Activated naive CD4-positive, alpha-beta T cell treated with anti-CD3 and anti-CD28 coated beads for 36 hours (primary cell): ENCODE measurements at regions of chr5 and their contacts with region 1.

Region 1: GRCh38 chr5:174418928-174419796 is 305.2 kb upstream of the MSX2 start:
- DNase-seq: peak; percentile 91
- H3K4me3 Mint-ChIP-seq: peak overlapping the region; percentile 34
- H3K27ac Mint-ChIP-seq: no peak overlapping the region
- H3K4me1 Mint-ChIP-seq: peaks cover 11% of the 10 kb centered on the region
- H3K27me3 Mint-ChIP-seq: peaks cover 26% of the 10 kb centered on the region

Region 2: DNA sequence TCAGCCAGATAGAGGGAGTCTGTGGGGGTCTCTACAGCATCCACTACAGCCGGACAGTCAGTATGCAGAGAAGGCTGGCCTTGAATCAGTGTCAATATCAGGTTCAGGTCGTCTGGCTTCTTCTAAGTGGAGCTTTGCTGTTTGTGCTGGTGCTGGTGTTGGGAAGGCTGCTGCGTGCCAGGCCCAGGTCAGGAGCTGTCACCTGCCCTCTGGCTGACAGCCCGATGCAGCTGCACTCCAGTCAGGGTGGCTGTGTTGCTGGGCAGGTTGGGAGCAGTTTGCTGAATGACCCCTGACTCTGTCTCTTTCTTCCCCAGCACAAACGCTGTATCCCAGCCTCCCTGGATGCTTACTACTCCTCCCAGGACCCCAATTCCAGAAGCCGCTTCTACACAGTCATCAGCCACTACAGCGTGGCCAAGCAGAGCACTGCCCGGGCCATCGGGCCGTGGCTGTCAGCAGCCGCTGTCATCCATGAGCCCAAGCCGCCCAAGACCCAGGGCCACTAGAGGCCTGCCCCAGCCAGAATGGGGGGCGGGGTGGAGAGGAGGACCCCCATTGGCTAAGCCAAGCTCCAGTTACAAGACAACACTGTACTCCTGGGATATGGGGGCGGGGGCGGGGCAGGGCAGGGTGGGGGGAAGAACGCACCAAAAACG is 312.0 kb before region 1 on chr5:
- CTCF ChIA-PET with region 1: no interaction called
- intact Hi-C with region 1: no loop called
- DNase-seq: no peak
- H3K4me3 Mint-ChIP-seq: no peak overlapping the region
- H3K27ac Mint-ChIP-seq: no peak overlapping the region
- H3K4me1 Mint-ChIP-seq: no peaks in the 10 kb centered on the region
- H3K27me3 Mint-ChIP-seq: peaks cover 3% of the 10 kb centered on the region

Region 3: GRCh38 chr5:174327317-174328236 is 91.6 kb before region 1 on chr5:
- CTCF ChIA-PET with region 1: no interaction called
- intact Hi-C with region 1: loop called (anchors 2 kb)
- DNase-seq: peak; percentile 76
- H3K4me3 Mint-ChIP-seq: no peak overlapping the region
- H3K27ac Mint-ChIP-seq: peak overlapping the region; percentile 31
- H3K4me1 Mint-ChIP-seq: no peaks in the 10 kb centered on the region
- H3K27me3 Mint-ChIP-seq: peaks cover 22% of the 10 kb centered on the region

Region 4: GRCh38 chr5:174735498-174736330 is 316.6 kb after region 1 on chr5:
- CTCF ChIA-PET with region 1: no interaction called
- intact Hi-C with region 1: loop called (anchors 1 kb)
- DNase-seq: peak; percentile 26
- H3K4me3 Mint-ChIP-seq: no peak overlapping the region
- H3K27ac Mint-ChIP-seq: peak overlapping the region; percentile 18
- H3K4me1 Mint-ChIP-seq: peaks cover 14% of the 10 kb centered on the region
- H3K27me3 Mint-ChIP-seq: peaks cover 72% of the 10 kb centered on the region

Region 5: DNA sequence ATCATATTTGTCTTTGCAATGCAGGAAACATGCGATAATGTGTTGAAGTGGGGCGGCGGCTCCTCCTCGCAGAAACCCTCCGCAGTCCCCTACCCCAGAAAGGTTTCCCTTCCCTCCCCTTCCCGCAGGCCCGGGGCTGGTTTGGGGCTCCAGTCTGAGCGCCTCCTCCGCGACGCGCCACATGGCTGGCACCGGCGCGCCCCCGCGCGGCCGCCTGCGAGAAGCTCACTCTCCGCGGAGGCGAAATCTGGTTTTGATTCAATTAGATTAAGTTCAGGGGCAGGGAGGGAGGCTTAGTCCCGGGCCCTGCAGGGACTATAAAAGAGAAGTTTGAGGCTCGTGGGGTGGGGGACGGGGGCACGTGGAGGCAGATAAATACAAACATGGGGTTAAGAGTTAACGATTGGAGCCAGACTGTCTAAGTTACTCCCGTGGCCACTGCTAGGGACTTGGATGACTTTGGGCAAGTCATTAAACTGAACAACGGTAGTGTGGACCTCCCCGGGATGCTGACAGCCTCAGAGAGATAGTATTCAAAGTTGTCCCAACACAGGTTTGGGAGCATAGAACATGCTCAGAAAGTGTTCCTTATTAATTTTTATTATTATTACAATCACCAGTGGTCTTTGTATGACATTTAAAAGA is 374.6 kb after region 1 on chr5:
- CTCF ChIA-PET with region 1: interaction called, 16 read pairs
- intact Hi-C with region 1: loop called (anchors 1 kb)
- DNase-seq: peak; percentile 59
- H3K4me3 Mint-ChIP-seq: no peak overlapping the region
- H3K27ac Mint-ChIP-seq: no peak overlapping the region
- H3K4me1 Mint-ChIP-seq: peaks cover 2% of the 10 kb centered on the region
- H3K27me3 Mint-ChIP-seq: peaks cover 49% of the 10 kb centered on the region

Region 6: GRCh38 chr5:174935854-174936474 is 516.8 kb after region 1 on chr5:
- CTCF ChIA-PET with region 1: no interaction called
- intact Hi-C with region 1: loop called (anchors 1 kb)
- DNase-seq: peak; percentile 52
- H3K4me3 Mint-ChIP-seq: no peak overlapping the region
- H3K27ac Mint-ChIP-seq: no peak overlapping the region
- H3K4me1 Mint-ChIP-seq: no peaks in the 10 kb centered on the region
- H3K27me3 Mint-ChIP-seq: peaks cover 14% of the 10 kb centered on the region